ENCODE measurements at regions of chr7 and their contacts with region 1.

Region 1: GRCh38 chr7:105589356-105590077 is 8.2 kb upstream of the EFCAB10 start:
- DNase-seq: peak; percentile 55
- ATAC-seq: peak; percentile 98
- H3K4me3 ChIP-seq: no peak overlapping the region
- H3K27ac ChIP-seq: no peak overlapping the region
- H3K4me1 ChIP-seq: no peaks in the 10 kb centered on the region
- H3K27me3 ChIP-seq: no peaks in the 10 kb centered on the region
- CTCF ChIP-seq: peak; percentile 71 to 76 (median 73)
- POLR2A ChIP-seq: no peak
- RAD21 ChIP-seq: peak; percentile 91

Region 2: DNA sequence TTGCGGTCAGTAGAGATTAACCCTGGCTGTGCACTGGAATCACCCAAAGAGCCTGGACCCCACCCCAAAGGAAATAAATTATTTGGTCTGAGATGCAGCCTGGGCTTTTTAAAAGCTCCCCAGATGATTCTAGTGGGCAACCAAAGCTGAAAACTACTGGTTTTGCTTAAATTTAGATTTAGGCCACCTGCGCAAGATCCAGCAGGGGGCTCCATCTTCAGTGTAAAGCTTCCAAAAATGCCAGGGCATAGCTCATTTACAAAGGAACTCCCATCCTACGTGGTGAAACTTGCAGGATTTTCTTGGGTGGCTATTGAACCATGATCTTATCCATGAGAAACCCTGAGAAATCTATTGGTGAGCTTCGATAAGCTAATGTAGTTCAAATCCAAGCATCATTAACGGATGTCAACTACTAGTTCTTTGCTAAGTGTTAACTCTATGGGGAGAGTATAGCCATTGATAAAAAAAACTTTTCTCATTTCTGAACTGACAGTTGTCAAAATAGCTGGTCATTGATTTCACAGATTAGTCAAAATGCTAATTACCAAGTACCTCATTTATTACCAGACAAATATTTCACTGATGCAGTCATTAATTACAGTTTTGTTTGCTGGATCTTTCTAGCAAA is 945.8 kb before region 1 on chr7:
- CTCF ChIA-PET with region 1: no interaction called
- POLR2A ChIA-PET with region 1: no interaction called
- RAD21 ChIA-PET with region 1: no interaction called
- intact Hi-C with region 1: loop called (anchors 5 kb)
- DNase-seq: peak; percentile 15
- ATAC-seq: peak; percentile 67
- H3K4me3 ChIP-seq: no peak overlapping the region
- H3K27ac ChIP-seq: no peak overlapping the region
- H3K4me1 ChIP-seq: no peaks in the 10 kb centered on the region
- H3K27me3 ChIP-seq: peaks cover 53% of the 10 kb centered on the region
- CTCF ChIP-seq: peak; percentile 49 to 77 (median 77); a peak in 5 of 6 replicates
- POLR2A ChIP-seq: no peak
- RAD21 ChIP-seq: peak; percentile 54

Region 3: GRCh38 chr7:104883718-104884452 is 705.6 kb before region 1 on chr7:
- CTCF ChIA-PET with region 1: interaction called, 13 read pairs
- POLR2A ChIA-PET with region 1: no interaction called
- RAD21 ChIA-PET with region 1: no interaction called
- intact Hi-C with region 1: loop called (anchors 1 kb)
- DNase-seq: peak; percentile 84
- ATAC-seq: peak; percentile 99
- H3K4me3 ChIP-seq: no peak overlapping the region
- H3K27ac ChIP-seq: no peak overlapping the region
- H3K4me1 ChIP-seq: peaks cover 3 to 11% of the 10 kb centered on the region in 2 experiments; a peak in 3 of 4 replicates
- H3K27me3 ChIP-seq: no peaks in the 10 kb centered on the region
- CTCF ChIP-seq: peak; percentile 79 to 97 (median 96)
- POLR2A ChIP-seq: no peak
- RAD21 ChIP-seq: peak; percentile 76

Region 4: GRCh38 chr7:105402221-105403095 is 187.1 kb before region 1 on chr7:
- CTCF ChIA-PET with region 1: interaction called, 4 read pairs
- POLR2A ChIA-PET with region 1: no interaction called
- RAD21 ChIA-PET with region 1: no interaction called
- intact Hi-C with region 1: loop called (anchors 5 kb)
- DNase-seq: no peak
- ATAC-seq: no peak
- H3K4me3 ChIP-seq: no peak overlapping the region
- H3K27ac ChIP-seq: no peak overlapping the region; the same call in 1 of the 2 replicates
- H3K4me1 ChIP-seq: peaks cover 5 to 17% of the 10 kb centered on the region in 2 experiments; a peak in 3 of 4 replicates
- H3K27me3 ChIP-seq: no peaks in the 10 kb centered on the region
- CTCF ChIP-seq: no peak
- POLR2A ChIP-seq: no peak
- RAD21 ChIP-seq: no peak

Region 5: GRCh38 chr7:106041140-106041717 is 451.7 kb after region 1 on chr7:
- CTCF ChIA-PET with region 1: interaction called, 5 read pairs
- POLR2A ChIA-PET with region 1: no interaction called
- RAD21 ChIA-PET with region 1: no interaction called
- intact Hi-C with region 1: loop called (anchors 10 kb)
- DNase-seq: peak; percentile 47
- ATAC-seq: peak; percentile 81
- H3K4me3 ChIP-seq: no peak overlapping the region
- H3K27ac ChIP-seq: no peak overlapping the region
- H3K4me1 ChIP-seq: peaks cover 0 to 12% of the 10 kb centered on the region in 2 experiments; a peak in 2 of 4 replicates
- H3K27me3 ChIP-seq: no peaks in the 10 kb centered on the region
- CTCF ChIP-seq: peak; percentile 67 to 94 (median 88); a peak in 5 of 6 replicates
- POLR2A ChIP-seq: no peak
- RAD21 ChIP-seq: peak; percentile 51

Measured in HCT116 (cell line).